ENCODE measurements at regions of chr14 and their contacts with region 1.

Region 1: GRCh38 chr14:23631702-23632460 is 4.3 kb upstream of the DHRS2 start:
- DNase-seq: peak; percentile 38
- H3K4me3 ChIP-seq: 0 out of 2 replicates have a peak overlapping the region, but pooled peaks have one; percentile 9
- CTCF ChIP-seq: peak; percentile 89

Region 2: GRCh38 chr14:22955702-22956569 is 675.9 kb before region 1 on chr14:
- CTCF ChIA-PET with region 1: no interaction called
- POLR2A ChIA-PET with region 1: no interaction called
- DNase-seq: no peak
- H3K4me3 ChIP-seq: peak overlapping the region; percentile 66
- CTCF ChIP-seq: no peak

Region 3: GRCh38 chr14:23551164-23551949 is 80.5 kb before region 1 on chr14 and contains the start of gene ZFHX2:
- CTCF ChIA-PET with region 1: no interaction called
- POLR2A ChIA-PET with region 1: no interaction called
- DNase-seq: no peak
- H3K4me3 ChIP-seq: peak within 1 kb of the TSS; percentile 64
- CTCF ChIP-seq: no peak

Region 4: GRCh38 chr14:23588884-23589598 is 42.8 kb before region 1 on chr14:
- CTCF ChIA-PET with region 1: interaction called, 23 read pairs
- POLR2A ChIA-PET with region 1: no interaction called
- DNase-seq: peak; percentile 44
- H3K4me3 ChIP-seq: no peak overlapping the region
- CTCF ChIP-seq: peak; percentile 96

Region 5: GRCh38 chr14:23621204-23621931 is 10.5 kb before region 1 on chr14:
- CTCF ChIA-PET with region 1: interaction called, 24 read pairs
- POLR2A ChIA-PET with region 1: no interaction called
- DNase-seq: no peak
- H3K4me3 ChIP-seq: no peak overlapping the region
- CTCF ChIP-seq: no peak

Region 6: DNA sequence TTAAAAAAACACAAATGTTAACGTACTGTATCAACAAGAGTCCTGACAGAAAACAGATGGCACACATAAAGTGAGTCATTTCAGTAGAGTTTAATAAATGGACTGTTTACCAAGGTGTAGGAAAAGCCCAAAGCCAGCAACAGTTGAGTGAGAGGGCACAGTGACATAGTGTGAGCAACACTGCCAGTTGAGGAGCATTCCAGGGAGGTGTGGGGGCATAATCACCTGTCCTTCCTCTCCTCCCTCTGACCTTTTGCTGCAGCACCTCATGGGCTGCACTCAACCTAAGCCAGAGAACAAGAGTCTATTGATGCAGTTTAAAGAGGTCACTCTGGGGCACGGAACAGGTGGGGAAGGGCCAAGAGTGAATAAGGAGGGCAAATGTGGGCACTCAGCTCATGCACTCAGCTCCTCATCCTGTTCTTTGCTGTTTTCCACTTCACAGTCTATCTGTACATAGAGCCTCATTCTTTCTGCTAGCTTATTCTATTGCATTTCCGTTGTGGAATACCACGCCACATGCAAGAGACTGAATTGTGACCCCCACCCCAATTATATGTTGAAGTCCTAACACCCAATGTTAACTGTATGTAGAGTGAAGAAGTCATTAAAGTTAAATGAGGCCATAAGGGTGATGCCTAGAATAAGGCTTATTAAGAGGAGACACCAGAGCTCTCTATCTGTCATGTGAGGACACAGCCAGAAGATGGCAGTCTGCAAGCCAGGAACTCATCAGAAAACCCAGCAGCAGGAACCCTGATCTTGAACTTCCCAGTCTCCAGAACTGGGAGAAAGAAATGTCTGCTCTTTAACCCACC is 33.7 kb after region 1 on chr14:
- CTCF ChIA-PET with region 1: interaction called, 30 read pairs
- POLR2A ChIA-PET with region 1: no interaction called
- DNase-seq: peak; percentile 7
- H3K4me3 ChIP-seq: no peak overlapping the region
- CTCF ChIP-seq: peak; percentile 71

Region 7: DNA sequence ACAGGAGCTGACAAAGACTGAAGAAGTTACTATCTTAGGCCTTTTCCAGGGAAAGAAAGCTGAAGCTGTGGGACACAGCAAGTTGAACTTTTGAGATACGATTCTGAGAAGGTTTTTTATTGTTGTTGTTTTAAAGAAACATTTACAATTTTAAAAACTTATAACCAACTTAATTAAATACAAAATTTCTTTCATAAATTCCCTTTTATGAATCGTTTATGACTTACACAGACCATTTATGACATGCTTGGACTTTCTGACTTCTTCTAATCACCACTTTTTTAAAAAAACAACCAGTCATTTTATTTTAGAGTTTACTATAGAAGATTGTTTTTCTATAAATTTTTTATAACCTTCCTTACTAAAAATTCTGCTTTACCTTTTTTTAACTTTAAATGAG is 73.0 kb after region 1 on chr14:
- CTCF ChIA-PET with region 1: no interaction called
- POLR2A ChIA-PET with region 1: no interaction called
- DNase-seq: no peak
- H3K4me3 ChIP-seq: no peak overlapping the region
- CTCF ChIP-seq: no peak

Region 8: GRCh38 chr14:23910101-23910875 is 278.4 kb after region 1 on chr14:
- CTCF ChIA-PET with region 1: interaction called, 125 read pairs
- POLR2A ChIA-PET with region 1: no interaction called
- DNase-seq: peak; percentile 33
- H3K4me3 ChIP-seq: no peak overlapping the region
- CTCF ChIP-seq: peak; percentile 80

Region 9: GRCh38 chr14:23922545-23922944 is 290.7 kb after region 1 on chr14:
- CTCF ChIA-PET with region 1: interaction called, 17 read pairs
- POLR2A ChIA-PET with region 1: no interaction called
- DNase-seq: no peak
- H3K4me3 ChIP-seq: no peak overlapping the region
- CTCF ChIP-seq: no peak

Region 10: DNA sequence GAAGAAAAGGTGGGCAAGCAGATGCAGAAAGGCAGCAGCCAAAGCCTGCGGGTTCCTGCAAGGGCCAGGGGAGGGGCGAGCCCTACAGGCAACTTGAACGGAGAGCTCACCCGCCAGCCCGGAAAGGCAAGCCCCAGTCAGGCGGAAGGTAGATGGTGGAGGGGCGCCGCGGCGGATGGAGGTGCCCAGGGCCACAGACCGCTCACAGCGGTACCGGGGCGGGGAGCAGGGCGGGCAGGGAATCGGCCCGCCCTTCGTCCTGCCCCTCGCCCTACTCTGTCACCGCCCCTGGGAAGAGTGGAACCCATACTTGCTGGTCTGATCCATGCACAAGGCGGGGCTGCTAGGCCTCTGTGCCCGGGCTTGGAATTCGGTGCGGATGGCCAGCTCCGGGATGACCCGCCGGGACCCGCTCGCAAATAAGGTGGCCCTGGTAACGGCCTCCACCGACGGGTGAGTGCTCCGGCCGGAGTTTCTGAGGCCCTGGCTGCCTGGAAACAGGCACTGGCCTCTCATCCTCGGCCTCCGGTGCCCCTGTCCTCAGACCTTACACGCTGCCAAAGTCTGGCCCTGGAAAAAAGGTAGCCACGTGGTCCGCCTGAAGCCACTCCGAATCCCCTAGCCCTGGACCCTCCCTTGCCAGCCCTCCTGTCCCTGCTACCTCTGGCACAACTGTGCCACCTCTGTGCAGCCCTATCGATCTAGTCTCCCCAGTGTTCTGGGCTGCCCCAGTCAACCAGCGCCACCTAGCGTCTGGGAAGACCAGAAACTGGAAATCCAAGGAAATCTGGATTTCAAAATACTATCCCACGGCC is 321.8 kb after region 1 on chr14 and contains the start of gene DHRS4:
- CTCF ChIA-PET with region 1: interaction called, 16 read pairs
- POLR2A ChIA-PET with region 1: no interaction called
- DNase-seq: no peak
- H3K4me3 ChIP-seq: peak within 1 kb of the TSS; percentile 87
- CTCF ChIP-seq: peak; percentile 82

Region 11: GRCh38 chr14:24123508-24124417 is 491.9 kb after region 1 on chr14:
- CTCF ChIA-PET with region 1: no interaction called
- POLR2A ChIA-PET with region 1: no interaction called
- DNase-seq: no peak
- H3K4me3 ChIP-seq: no peak overlapping the region
- CTCF ChIP-seq: no peak

Measured in AG04449 (cell line).